ENCODE measurements at regions of chr4 and their contacts with region 1.

Region 1: DNA sequence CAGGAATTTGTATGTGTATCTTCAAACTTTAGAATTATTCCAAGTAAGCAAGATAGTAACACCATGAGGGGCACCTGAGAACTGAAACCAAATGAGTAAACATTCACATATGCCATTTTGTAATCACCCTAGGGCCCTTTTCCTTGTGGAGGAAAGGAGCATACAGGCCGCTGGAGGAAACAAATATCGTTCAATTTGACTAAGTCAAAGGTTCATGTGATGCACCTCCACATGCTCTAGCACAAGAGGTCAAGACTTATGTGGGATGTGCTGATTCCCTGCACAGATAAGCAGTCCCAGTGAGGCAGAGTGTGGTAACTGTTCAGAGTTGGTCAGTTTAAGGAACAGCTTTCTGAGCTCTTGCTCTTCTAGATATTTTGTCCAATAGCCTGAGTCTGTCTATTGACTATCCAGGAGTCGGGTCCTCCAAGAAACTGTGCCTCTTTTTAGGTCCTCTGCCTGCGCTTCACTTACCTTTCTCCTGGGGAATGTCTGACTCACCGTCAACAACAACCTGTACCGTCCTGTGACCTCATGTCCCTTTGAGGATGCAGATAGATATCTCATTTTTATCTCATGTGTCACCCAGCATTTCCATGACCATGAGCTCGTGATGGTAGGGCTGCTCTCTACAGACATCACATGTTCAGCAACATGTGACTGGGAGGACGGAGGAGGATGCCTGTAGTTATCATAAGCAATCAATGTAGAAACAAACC is 196.9 kb downstream of the NWD2 start:
- DNase-seq: no peak
- H3K4me3 ChIP-seq: no peak overlapping the region
- H3K27ac ChIP-seq: no peak overlapping the region
- H3K4me1 ChIP-seq: no peaks in the 10 kb centered on the region
- H3K27me3 ChIP-seq: peaks cover 0 to 15% of the 10 kb centered on the region in 2 donors
- CTCF ChIP-seq: no peak
- POLR2A ChIP-seq: no peak

Region 2: DNA sequence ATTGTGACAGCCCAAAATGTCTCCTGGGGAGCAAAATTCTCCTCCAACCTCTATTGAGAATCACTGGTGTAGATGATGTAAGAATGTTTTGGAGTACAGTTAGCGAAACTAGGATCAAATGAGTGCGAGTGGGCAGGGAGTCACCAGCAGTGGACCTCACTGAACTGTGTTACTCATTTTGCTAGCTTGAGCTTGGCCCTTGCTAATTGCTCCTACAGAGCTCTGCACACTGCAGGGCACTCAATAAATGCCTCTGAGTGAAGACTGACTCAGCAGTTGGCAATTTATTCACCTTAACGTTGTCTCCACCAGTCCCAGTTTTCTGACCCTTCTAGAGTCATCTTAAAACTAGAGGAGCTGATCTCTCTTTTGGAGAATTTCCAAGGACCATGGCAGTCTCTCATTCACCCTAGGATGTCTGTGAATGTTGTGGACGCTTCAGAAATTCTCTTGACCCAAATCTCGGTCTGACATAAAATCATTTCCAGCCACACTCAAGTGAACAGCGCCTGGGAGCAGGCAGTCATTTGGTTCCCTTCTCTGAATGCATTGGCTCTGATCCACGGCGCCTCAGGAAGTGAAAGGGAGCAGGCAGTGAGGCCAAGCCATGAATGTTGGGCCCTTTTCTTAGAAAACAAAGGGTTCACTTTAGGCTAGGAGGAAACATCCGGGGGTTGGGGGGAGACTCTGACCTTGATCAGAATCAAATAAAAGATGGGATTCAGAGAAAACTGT is 48.7 kb before region 1 on chr4:
- intact Hi-C with region 1: no loop called
- DNase-seq: no peak
- H3K4me3 ChIP-seq: no peak overlapping the region
- H3K27ac ChIP-seq: no peak overlapping the region
- H3K4me1 ChIP-seq: no peaks in the 10 kb centered on the region
- H3K27me3 ChIP-seq: no peaks in the 10 kb centered on the region
- CTCF ChIP-seq: no peak
- POLR2A ChIP-seq: no peak

Region 3: GRCh38 chr4:37934096-37934495 is 492.7 kb after region 1 on chr4:
- intact Hi-C with region 1: loop called (anchors 5 kb)
- DNase-seq: no peak
- H3K4me3 ChIP-seq: no peak overlapping the region
- H3K27ac ChIP-seq: no peak overlapping the region
- H3K4me1 ChIP-seq: no peaks in the 10 kb centered on the region
- H3K27me3 ChIP-seq: no peaks in the 10 kb centered on the region
- CTCF ChIP-seq: no peak
- POLR2A ChIP-seq: no peak

Region 4: GRCh38 chr4:38141808-38142500 is 700.5 kb after region 1 on chr4:
- intact Hi-C with region 1: no loop called
- DNase-seq: no peak
- H3K4me3 ChIP-seq: no peak overlapping the region
- H3K27ac ChIP-seq: peak overlapping the region in 1 of 2 donors; percentile 33
- H3K4me1 ChIP-seq: no peaks in the 10 kb centered on the region
- H3K27me3 ChIP-seq: no peaks in the 10 kb centered on the region
- CTCF ChIP-seq: no peak
- POLR2A ChIP-seq: no peak